Posterior vena cava (tissue), 2 donors: ENCODE measurements at regions of chr13 and their contacts with region 1.

Region 1: GRCh38 chr13:29850224-29850898 is at the start of gene UBL3:
- DNase-seq: peak; percentile 99
- total RNA-seq, gene UBL3: 29.6 to 32.9 TPM

Region 2: GRCh38 chr13:29902101-29902952 is 52.0 kb after region 1 on chr13:
- intact Hi-C with region 1: no loop called
- DNase-seq: no peak

Region 3: DNA sequence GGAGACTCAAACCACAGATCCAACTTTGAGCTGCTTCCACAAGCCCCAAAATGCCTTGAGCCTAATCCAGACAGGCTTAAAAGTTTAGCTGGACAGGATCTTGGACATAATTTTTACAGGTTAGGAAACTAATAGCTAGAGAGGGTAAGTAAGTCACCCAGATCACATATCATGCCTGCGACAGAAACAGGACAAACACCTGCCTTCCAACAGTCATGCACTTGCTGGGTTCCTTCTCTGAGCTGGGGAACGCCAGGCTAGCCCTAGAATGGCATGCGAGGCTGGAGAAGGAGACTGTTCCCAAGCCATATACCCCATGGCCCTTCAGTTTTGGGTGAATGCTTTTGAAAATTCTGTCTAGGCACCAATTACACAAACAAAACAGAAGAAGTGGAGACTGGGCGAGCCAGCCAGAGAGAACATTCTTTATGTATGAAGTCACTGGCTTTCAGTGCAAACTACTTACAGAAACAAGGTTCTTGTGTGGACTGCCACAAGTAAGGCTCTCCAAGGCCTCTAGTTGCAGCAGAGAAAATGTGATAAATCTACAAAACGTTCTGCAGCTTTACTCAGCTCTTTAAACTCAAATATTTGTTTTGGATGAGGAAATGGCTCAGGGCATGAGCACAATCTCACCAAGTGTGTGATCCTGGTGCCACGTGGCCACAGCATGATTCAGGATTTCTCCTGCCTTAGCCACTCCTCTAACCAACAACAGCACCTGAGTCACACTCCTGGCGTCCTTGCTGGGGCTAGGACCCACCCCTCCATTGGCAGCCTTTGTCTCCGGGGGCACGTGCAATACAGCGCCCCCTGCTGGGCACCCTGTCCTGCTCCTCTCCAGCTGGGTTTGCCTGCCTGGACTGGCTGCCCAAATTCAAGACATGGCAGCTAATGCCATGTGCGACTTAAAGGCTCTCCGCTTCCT is 73.5 kb after region 1 on chr13:
- intact Hi-C with region 1: loop called in 1 of 2 experiments (anchors 5 kb)
- DNase-seq: peak; percentile 95